GM12878 (cell line): ENCODE measurements at regions of chr20 and their contacts with region 1.

Region 1: GRCh38 chr20:39874049-39874888 is 814.8 kb downstream of the MAFB start:
- DNase-seq: peak; percentile 60
- ATAC-seq: peak; percentile 99
- H3K4me3 ChIP-seq: no peak overlapping the region
- H3K27ac ChIP-seq: no peak overlapping the region
- H3K4me1 ChIP-seq: no peaks in the 10 kb centered on the region; the same call in 1 of the 2 replicates
- H3K27me3 ChIP-seq: no peaks in the 10 kb centered on the region
- CTCF ChIP-seq: peak; percentile 86 to 98 (median 91)
- EP300 ChIP-seq: no peak
- POLR2A ChIP-seq: no peak
- RAD21 ChIP-seq: peak; percentile 91

Region 2: DNA sequence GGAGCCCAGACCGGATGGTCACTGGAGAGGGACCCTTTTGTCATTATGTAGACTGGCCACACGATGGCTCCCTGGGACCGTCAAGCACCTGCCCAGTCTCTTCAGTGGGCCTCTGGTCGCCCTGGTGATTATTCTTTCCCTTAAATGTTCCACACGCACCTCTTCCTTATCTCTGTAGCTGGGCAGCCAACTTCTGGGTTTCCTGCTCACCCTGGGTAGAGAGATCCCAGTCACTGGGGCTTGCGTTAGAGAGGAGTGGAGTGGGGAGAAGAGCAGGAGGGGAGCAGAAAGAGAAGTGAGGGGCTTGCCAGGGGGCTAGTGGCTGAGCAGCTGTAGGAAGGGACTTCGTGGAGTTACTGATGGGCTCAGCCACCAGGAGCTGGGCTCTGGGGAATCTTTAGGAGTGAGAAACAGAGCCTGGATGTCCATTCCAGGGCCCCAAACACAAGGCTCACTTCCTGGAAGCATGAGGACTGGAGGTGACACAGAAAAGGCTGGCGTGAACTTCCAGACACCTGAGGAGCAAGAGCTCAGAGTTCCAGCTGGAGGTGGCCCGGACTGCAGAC is 762.0 kb before region 1 on chr20:
- CTCF ChIA-PET with region 1: interaction called, 6 read pairs
- POLR2A ChIA-PET with region 1: no interaction called
- RAD21 ChIA-PET with region 1: no interaction called
- SMC1A ChIA-PET with region 1: no interaction called
- in situ Hi-C with region 1: no loop called
- intact Hi-C with region 1: loop called (anchors 5 kb)
- DNase-seq: no peak
- ATAC-seq: peak; percentile 94
- H3K4me3 ChIP-seq: no peak overlapping the region
- H3K27ac ChIP-seq: no peak overlapping the region
- H3K4me1 ChIP-seq: peaks cover 5% of the 10 kb centered on the region; the same call in 1 of the 2 replicates
- H3K27me3 ChIP-seq: no peaks in the 10 kb centered on the region; a peak in 1 of 4 replicates
- CTCF ChIP-seq: peak; percentile 54 to 62 (median 57); a peak in 5 of 6 replicates
- EP300 ChIP-seq: no peak
- POLR2A ChIP-seq: no peak
- RAD21 ChIP-seq: peak; percentile 68

Region 3: GRCh38 chr20:39289316-39289715 is 585.0 kb before region 1 on chr20:
- CTCF ChIA-PET with region 1: interaction called, 20 read pairs
- POLR2A ChIA-PET with region 1: no interaction called
- RAD21 ChIA-PET with region 1: interaction called, 5 read pairs
- SMC1A ChIA-PET with region 1: interaction called, 11 read pairs
- in situ Hi-C with region 1: no loop called
- intact Hi-C with region 1: no loop called
- DNase-seq: no peak
- ATAC-seq: peak; percentile 73
- H3K4me3 ChIP-seq: no peak overlapping the region
- H3K27ac ChIP-seq: no peak overlapping the region
- H3K4me1 ChIP-seq: no peaks in the 10 kb centered on the region
- H3K27me3 ChIP-seq: no peaks in the 10 kb centered on the region
- CTCF ChIP-seq: peak; percentile 43 to 70 (median 43); a peak in 4 of 6 replicates
- EP300 ChIP-seq: no peak
- POLR2A ChIP-seq: no peak
- RAD21 ChIP-seq: peak; percentile 54

Region 4: GRCh38 chr20:39328347-39328746 is 545.9 kb before region 1 on chr20:
- CTCF ChIA-PET with region 1: no interaction called
- POLR2A ChIA-PET with region 1: no interaction called
- RAD21 ChIA-PET with region 1: no interaction called
- SMC1A ChIA-PET with region 1: no interaction called
- in situ Hi-C with region 1: no loop called
- intact Hi-C with region 1: no loop called
- DNase-seq: no peak
- ATAC-seq: no peak
- H3K4me3 ChIP-seq: no peak overlapping the region
- H3K27ac ChIP-seq: no peak overlapping the region
- H3K4me1 ChIP-seq: no peaks in the 10 kb centered on the region
- H3K27me3 ChIP-seq: no peaks in the 10 kb centered on the region; a peak in 1 of 4 replicates
- CTCF ChIP-seq: no peak
- EP300 ChIP-seq: no peak
- POLR2A ChIP-seq: no peak
- RAD21 ChIP-seq: no peak

Region 5: GRCh38 chr20:39676857-39677391 is 197.3 kb before region 1 on chr20:
- CTCF ChIA-PET with region 1: interaction called, 55 read pairs
- POLR2A ChIA-PET with region 1: interaction called, 4 read pairs
- RAD21 ChIA-PET with region 1: interaction called, 26 read pairs
- SMC1A ChIA-PET with region 1: interaction called, 23 read pairs
- in situ Hi-C with region 1: no loop called
- intact Hi-C with region 1: loop called (anchors 1 kb)
- DNase-seq: no peak
- ATAC-seq: no peak; the same call in 2 of the 3 replicates
- H3K4me3 ChIP-seq: no peak overlapping the region
- H3K27ac ChIP-seq: no peak overlapping the region
- H3K4me1 ChIP-seq: no peaks in the 10 kb centered on the region
- H3K27me3 ChIP-seq: no peaks in the 10 kb centered on the region; a peak in 1 of 4 replicates
- CTCF ChIP-seq: peak; percentile 25 to 30 (median 29); a peak in 3 of 6 replicates
- EP300 ChIP-seq: no peak
- POLR2A ChIP-seq: no peak
- RAD21 ChIP-seq: no peak

Region 6: GRCh38 chr20:39785252-39785917 is 88.9 kb before region 1 on chr20:
- CTCF ChIA-PET with region 1: interaction called, 15 read pairs
- POLR2A ChIA-PET with region 1: no interaction called
- RAD21 ChIA-PET with region 1: interaction called, 8 read pairs
- SMC1A ChIA-PET with region 1: interaction called, 6 read pairs
- in situ Hi-C with region 1: no loop called
- intact Hi-C with region 1: no loop called
- DNase-seq: no peak
- ATAC-seq: peak; percentile 68
- H3K4me3 ChIP-seq: no peak overlapping the region
- H3K27ac ChIP-seq: no peak overlapping the region
- H3K4me1 ChIP-seq: no peaks in the 10 kb centered on the region
- H3K27me3 ChIP-seq: no peaks in the 10 kb centered on the region
- CTCF ChIP-seq: no peak
- EP300 ChIP-seq: no peak
- POLR2A ChIP-seq: no peak
- RAD21 ChIP-seq: no peak

Region 7: GRCh38 chr20:39862470-39862891 is 11.8 kb before region 1 on chr20:
- CTCF ChIA-PET with region 1: interaction called, 13 read pairs
- POLR2A ChIA-PET with region 1: no interaction called
- RAD21 ChIA-PET with region 1: no interaction called
- SMC1A ChIA-PET with region 1: interaction called, 7 read pairs
- in situ Hi-C with region 1: no loop called
- intact Hi-C with region 1: no loop called
- DNase-seq: no peak
- ATAC-seq: no peak
- H3K4me3 ChIP-seq: no peak overlapping the region
- H3K27ac ChIP-seq: no peak overlapping the region
- H3K4me1 ChIP-seq: no peaks in the 10 kb centered on the region
- H3K27me3 ChIP-seq: no peaks in the 10 kb centered on the region
- CTCF ChIP-seq: no peak
- EP300 ChIP-seq: no peak
- POLR2A ChIP-seq: no peak
- RAD21 ChIP-seq: no peak